Right cardiac atrium (tissue), 5 donors: ENCODE measurements at regions of chr7 and their contacts with region 1.

Region 1: GRCh38 chr7:143240291-143241168 is 18.7 kb downstream of the TAS2R40 start:
- DNase-seq: peak; percentile 48 to 71 (median 61)
- ATAC-seq: peak; percentile 85 to 88
- H3K4me3 ChIP-seq: no peak overlapping the region
- H3K27ac ChIP-seq: no peak overlapping the region
- H3K4me1 ChIP-seq: no peaks in the 10 kb centered on the region
- H3K27me3 ChIP-seq: no peaks in the 10 kb centered on the region

Region 2: DNA sequence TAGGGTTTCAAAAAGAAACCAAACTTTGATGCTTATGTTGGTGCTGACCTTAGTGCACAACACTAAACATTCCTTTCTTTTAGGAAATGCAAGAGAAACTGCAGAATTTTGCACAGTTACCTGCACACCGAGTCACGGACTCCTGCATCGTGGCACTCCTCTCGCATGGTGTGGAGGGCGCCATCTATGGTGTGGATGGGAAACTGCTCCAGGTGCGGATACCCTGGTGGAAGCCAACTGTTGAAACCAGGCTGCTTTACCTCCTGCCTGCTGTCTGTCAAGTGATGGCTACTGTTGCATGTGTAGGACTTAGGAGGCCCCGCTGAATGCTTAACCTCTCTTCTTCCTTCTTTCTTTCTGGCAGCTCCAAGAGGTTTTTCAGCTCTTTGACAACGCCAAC is 59.3 kb after region 1 on chr7:
- intact Hi-C with region 1: loop called in 3 of 4 experiments (anchors 2 to 5 kb)
- DNase-seq: no peak
- ATAC-seq: peak in 1 of 2 donors; percentile 44
- H3K4me3 ChIP-seq: no peak overlapping the region
- H3K27ac ChIP-seq: no peak overlapping the region
- H3K4me1 ChIP-seq: no peaks in the 10 kb centered on the region
- H3K27me3 ChIP-seq: no peaks in the 10 kb centered on the region

Region 3: GRCh38 chr7:143305423-143306070 is 65.0 kb after region 1 on chr7:
- intact Hi-C with region 1: loop called in 3 of 4 experiments (anchors 2 to 5 kb)
- DNase-seq: peak; percentile 76 to 89 (median 88)
- ATAC-seq: peak; percentile 86
- H3K4me3 ChIP-seq: no peak overlapping the region
- H3K27ac ChIP-seq: no peak overlapping the region
- H3K4me1 ChIP-seq: peaks cover 1% of the 10 kb centered on the region
- H3K27me3 ChIP-seq: no peaks in the 10 kb centered on the region

Region 4: GRCh38 chr7:143408686-143409561 is 168.4 kb after region 1 on chr7 and contains the start of gene EPHA1:
- intact Hi-C with region 1: loop called in 2 of 4 experiments (anchors 10 kb)
- DNase-seq: peak in 1 of 3 donors; percentile 45
- ATAC-seq: peak in 1 of 2 donors; percentile 38
- H3K4me3 ChIP-seq: peak within 1 kb of the TSS; percentile 21
- H3K27ac ChIP-seq: no peak within 1 kb of the TSS
- H3K4me1 ChIP-seq: peaks cover 2% of the 10 kb centered on the region
- H3K27me3 ChIP-seq: no peaks in the 10 kb centered on the region
- total RNA-seq, gene EPHA1: 0.46 to 0.56 TPM in 2 of 4 donors, not detected in the others

Region 5: GRCh38 chr7:143416565-143417149 is 176.1 kb after region 1 on chr7:
- intact Hi-C with region 1: loop called in 3 of 4 experiments (anchors 5 to 10 kb)
- DNase-seq: no peak
- ATAC-seq: peak in 1 of 2 donors; percentile 43
- H3K4me3 ChIP-seq: no peak overlapping the region
- H3K27ac ChIP-seq: no peak overlapping the region
- H3K4me1 ChIP-seq: no peaks in the 10 kb centered on the region
- H3K27me3 ChIP-seq: no peaks in the 10 kb centered on the region